GM12878 (cell line): ENCODE measurements at regions of chr16 and their contacts with region 1.

Region 1: DNA sequence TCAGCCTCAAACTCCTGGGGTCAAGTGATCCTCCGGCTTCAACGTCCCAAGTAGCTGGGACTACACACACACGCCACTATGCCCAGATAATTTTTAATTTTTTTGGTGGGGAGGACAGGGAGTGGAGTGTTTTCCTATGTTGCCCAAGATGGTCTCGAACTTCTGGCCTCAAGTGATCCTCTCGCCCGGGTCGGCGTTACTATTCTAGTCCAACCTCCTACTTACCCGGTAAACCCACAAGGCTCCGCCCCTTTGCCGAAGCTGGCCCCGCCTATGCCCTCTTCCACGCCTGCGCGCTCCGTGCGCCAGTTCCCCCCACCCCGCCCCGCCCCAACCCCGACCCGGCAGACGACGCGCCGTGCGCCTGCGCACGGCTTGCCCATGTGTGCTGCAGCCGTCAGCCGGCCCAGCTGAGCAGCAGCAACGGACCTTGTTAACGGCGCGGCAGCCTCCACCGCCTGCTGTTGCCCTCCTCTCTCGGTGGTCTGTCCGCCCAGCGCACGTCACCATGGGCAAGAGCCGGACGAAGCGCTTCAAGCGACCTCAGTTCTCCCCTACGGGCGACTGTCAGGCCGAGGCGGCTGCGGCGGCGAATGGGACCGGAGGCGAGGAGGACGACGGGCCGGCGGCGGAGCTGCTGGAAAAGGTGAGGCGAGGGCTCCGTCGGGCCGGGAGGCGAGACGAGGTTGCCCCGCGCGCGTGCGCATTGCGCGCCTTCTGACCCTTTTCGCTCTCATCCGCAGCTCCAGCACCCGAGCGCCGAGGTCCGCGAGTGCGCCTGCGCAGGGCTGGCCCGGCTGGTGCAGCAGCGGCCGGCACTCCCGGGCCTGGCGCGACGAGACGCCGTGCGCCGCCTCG is at the start of gene HEATR3:
- DNase-seq: peak; percentile 82
- ATAC-seq: peak; percentile 93
- H3K4me3 ChIP-seq: peak within 1 kb of the TSS; percentile 99
- H3K27ac ChIP-seq: peak within 1 kb of the TSS; percentile 86
- H3K4me1 ChIP-seq: peaks cover 15% of the 10 kb centered on the region
- H3K27me3 ChIP-seq: no peaks in the 10 kb centered on the region
- CTCF ChIP-seq: no peak
- EP300 ChIP-seq: no peak
- POLR2A ChIP-seq: peak; percentile 89
- RAD21 ChIP-seq: no peak
- polyA plus RNA-seq, gene HEATR3: 1.5 to 5.0 TPM

Region 2: GRCh38 chr16:49910541-49911071 is 155.2 kb before region 1 on chr16:
- CTCF ChIA-PET with region 1: no interaction called
- POLR2A ChIA-PET with region 1: no interaction called
- RAD21 ChIA-PET with region 1: no interaction called
- SMC1A ChIA-PET with region 1: no interaction called
- in situ Hi-C with region 1: no loop called
- intact Hi-C with region 1: no loop called
- DNase-seq: no peak
- ATAC-seq: no peak
- H3K4me3 ChIP-seq: no peak overlapping the region
- H3K27ac ChIP-seq: no peak overlapping the region
- H3K4me1 ChIP-seq: no peaks in the 10 kb centered on the region
- H3K27me3 ChIP-seq: no peaks in the 10 kb centered on the region; a peak in 1 of 4 replicates
- CTCF ChIP-seq: no peak
- EP300 ChIP-seq: no peak
- POLR2A ChIP-seq: no peak
- RAD21 ChIP-seq: no peak

Region 3: GRCh38 chr16:49932946-49933345 is 132.9 kb before region 1 on chr16:
- CTCF ChIA-PET with region 1: no interaction called
- POLR2A ChIA-PET with region 1: no interaction called
- RAD21 ChIA-PET with region 1: no interaction called
- SMC1A ChIA-PET with region 1: no interaction called
- in situ Hi-C with region 1: no loop called
- intact Hi-C with region 1: no loop called
- DNase-seq: no peak
- ATAC-seq: no peak
- H3K4me3 ChIP-seq: no peak overlapping the region
- H3K27ac ChIP-seq: no peak overlapping the region
- H3K4me1 ChIP-seq: no peaks in the 10 kb centered on the region
- H3K27me3 ChIP-seq: peaks cover 1 to 2% of the 10 kb centered on the region in 2 experiments; a peak in 1 of 4 replicates
- CTCF ChIP-seq: no peak
- EP300 ChIP-seq: no peak
- POLR2A ChIP-seq: no peak
- RAD21 ChIP-seq: no peak

Region 4: GRCh38 chr16:50079397-50080140 is 13.7 kb after region 1 on chr16:
- CTCF ChIA-PET with region 1: interaction called, 11 read pairs
- POLR2A ChIA-PET with region 1: no interaction called
- RAD21 ChIA-PET with region 1: interaction called, 10 read pairs
- SMC1A ChIA-PET with region 1: interaction called, 4 read pairs
- in situ Hi-C with region 1: no loop called
- intact Hi-C with region 1: no loop called
- DNase-seq: no peak
- ATAC-seq: no peak
- H3K4me3 ChIP-seq: no peak overlapping the region
- H3K27ac ChIP-seq: no peak overlapping the region
- H3K4me1 ChIP-seq: no peaks in the 10 kb centered on the region
- H3K27me3 ChIP-seq: no peaks in the 10 kb centered on the region
- CTCF ChIP-seq: no peak
- EP300 ChIP-seq: no peak
- POLR2A ChIP-seq: no peak
- RAD21 ChIP-seq: no peak

Region 5: DNA sequence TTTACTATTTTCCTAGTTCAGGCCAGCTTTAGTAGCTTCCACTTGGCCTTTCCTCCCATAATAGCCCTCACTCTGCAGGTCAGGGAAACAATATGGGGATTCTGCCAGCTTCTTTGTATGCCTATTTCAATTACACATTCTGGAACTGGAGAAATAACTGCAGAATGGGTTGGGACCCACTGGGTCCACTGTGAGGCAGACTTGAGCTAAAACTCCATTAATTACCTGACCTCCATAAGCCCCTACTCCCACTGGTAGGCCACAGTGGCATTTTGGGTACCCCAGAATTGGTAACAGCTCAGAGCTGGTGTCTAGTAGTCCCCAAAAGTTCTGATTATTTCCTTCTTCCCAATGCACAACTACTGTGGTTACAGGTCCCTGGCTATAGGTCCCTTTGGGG is 70.5 kb after region 1 on chr16:
- CTCF ChIA-PET with region 1: interaction called, 13 read pairs
- POLR2A ChIA-PET with region 1: no interaction called
- RAD21 ChIA-PET with region 1: interaction called, 4 read pairs
- SMC1A ChIA-PET with region 1: interaction called, 7 read pairs
- in situ Hi-C with region 1: no loop called
- intact Hi-C with region 1: no loop called
- DNase-seq: no peak
- ATAC-seq: peak; percentile 44; the same call in 1 of the 3 replicates
- H3K4me3 ChIP-seq: no peak overlapping the region
- H3K27ac ChIP-seq: no peak overlapping the region
- H3K4me1 ChIP-seq: no peaks in the 10 kb centered on the region
- H3K27me3 ChIP-seq: no peaks in the 10 kb centered on the region
- CTCF ChIP-seq: peak in 2 of 3 experiments; percentile 6 to 23; a peak in 1 of 6 replicates
- EP300 ChIP-seq: no peak
- POLR2A ChIP-seq: no peak
- RAD21 ChIP-seq: peak; percentile 40; the same call in 1 of the 2 replicates

Region 6: GRCh38 chr16:50160495-50161164 is 94.8 kb after region 1 on chr16:
- CTCF ChIA-PET with region 1: interaction called, 22 read pairs
- POLR2A ChIA-PET with region 1: interaction called, 3 read pairs
- RAD21 ChIA-PET with region 1: interaction called, 5 read pairs
- SMC1A ChIA-PET with region 1: interaction called, 15 read pairs
- in situ Hi-C with region 1: no loop called
- intact Hi-C with region 1: no loop called
- DNase-seq: no peak
- ATAC-seq: peak; percentile 59
- H3K4me3 ChIP-seq: peak overlapping the region; percentile 9; the same call in 1 of the 2 replicates
- H3K27ac ChIP-seq: no peak overlapping the region
- H3K4me1 ChIP-seq: peaks cover 8% of the 10 kb centered on the region; the same call in 1 of the 2 replicates
- H3K27me3 ChIP-seq: no peaks in the 10 kb centered on the region
- CTCF ChIP-seq: no peak
- EP300 ChIP-seq: 0 out of 4 replicates have a peak, but pooled peaks of 1 of the 2 experiments have one; percentile 38
- POLR2A ChIP-seq: no peak
- RAD21 ChIP-seq: no peak

Region 7: DNA sequence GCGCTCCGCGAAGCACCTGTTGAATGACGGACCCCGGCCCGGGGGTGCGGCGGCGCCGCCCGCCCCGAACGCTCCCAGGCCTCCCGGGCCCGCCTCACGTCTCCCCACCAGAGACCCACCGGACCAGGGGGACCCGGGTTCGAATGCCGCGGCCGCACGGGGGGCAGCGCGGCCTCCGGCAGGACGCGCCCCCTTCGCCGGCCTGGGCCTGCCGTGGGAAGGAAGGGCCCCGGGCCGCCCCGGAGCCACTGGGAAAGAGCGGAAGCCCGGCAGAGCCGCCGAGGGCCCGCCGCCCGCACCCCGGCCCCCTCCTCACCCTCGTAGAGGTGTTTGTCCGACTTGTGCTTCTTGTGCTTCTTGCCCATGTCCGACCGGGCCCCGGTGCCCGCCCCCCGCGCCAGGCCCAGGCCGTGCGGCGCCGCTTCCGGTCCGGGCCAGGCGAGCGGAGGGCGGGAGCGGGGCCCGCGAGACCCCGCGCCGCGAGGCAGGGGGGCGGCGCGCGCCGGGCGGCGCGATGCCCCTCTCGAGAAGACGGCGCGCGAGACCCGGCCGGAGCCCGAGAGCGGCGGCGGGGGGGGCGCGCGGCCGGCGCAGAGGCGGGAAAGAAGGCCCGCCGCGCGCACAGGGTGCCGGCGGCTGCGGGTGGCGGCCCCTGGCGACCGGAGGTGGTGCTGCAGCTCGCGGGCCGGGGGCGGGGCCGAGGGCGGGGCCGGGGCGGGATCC is 302.7 kb after region 1 on chr16 and contains the start of gene BRD7:
- CTCF ChIA-PET with region 1: interaction called, 6 read pairs
- POLR2A ChIA-PET with region 1: no interaction called
- RAD21 ChIA-PET with region 1: interaction called, 3 read pairs
- SMC1A ChIA-PET with region 1: no interaction called
- in situ Hi-C with region 1: no loop called
- intact Hi-C with region 1: loop called (anchors 5 kb)
- DNase-seq: no peak
- ATAC-seq: peak; percentile 82
- H3K4me3 ChIP-seq: peak within 1 kb of the TSS; percentile 91
- H3K27ac ChIP-seq: peak within 1 kb of the TSS; percentile 54
- H3K4me1 ChIP-seq: no peaks in the 10 kb centered on the region; the same call in 1 of the 2 replicates
- H3K27me3 ChIP-seq: no peaks in the 10 kb centered on the region
- CTCF ChIP-seq: peak in 2 of 3 experiments; percentile 42 to 52; a peak in 3 of 6 replicates
- EP300 ChIP-seq: no peak
- POLR2A ChIP-seq: peak; percentile 49; the same call in 1 of the 2 replicates
- RAD21 ChIP-seq: no peak; the same call in 1 of the 2 replicates
- polyA plus RNA-seq, gene BRD7: 16.9 to 36.5 TPM